Naive thymus-derived CD8-positive, alpha-beta T cell (primary cell): ENCODE measurements at regions of chr5 and their contacts with region 1.

Region 1: DNA sequence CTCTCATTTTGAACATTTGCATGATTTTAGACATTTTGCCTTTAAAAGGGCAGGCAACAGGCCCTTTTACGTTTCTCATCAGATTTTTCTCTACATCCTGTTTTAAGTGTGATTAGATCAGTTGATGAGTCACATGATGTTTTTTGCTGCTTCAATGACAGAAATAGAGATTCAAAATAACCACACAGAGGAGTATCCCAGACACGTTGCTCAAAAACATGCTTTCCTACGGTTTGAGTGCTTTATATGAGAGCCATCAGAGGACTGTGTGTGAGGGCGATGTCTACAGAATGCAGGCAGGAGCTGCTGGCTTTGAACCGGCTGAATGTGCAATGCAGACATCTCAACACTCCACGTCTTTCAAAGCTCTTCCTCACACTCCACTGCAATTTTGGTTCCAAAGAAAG is 42.1 kb downstream of the OTULIN start:
- DNase-seq: peak in 9 of 10 donors; percentile 29 to 84 (median 60)
- ATAC-seq: peak; percentile 95 to 96
- H3K4me3 Mint-ChIP-seq: peak overlapping the region; percentile 67 to 89 (median 84)
- H3K27ac Mint-ChIP-seq: peak overlapping the region; percentile 95 to 100 (median 100)
- H3K4me1 Mint-ChIP-seq: peaks cover 43 to 84% (median 78%) of the 10 kb centered on the region in 4 donors
- H3K27me3 Mint-ChIP-seq: no peaks in the 10 kb centered on the region

Region 2: DNA sequence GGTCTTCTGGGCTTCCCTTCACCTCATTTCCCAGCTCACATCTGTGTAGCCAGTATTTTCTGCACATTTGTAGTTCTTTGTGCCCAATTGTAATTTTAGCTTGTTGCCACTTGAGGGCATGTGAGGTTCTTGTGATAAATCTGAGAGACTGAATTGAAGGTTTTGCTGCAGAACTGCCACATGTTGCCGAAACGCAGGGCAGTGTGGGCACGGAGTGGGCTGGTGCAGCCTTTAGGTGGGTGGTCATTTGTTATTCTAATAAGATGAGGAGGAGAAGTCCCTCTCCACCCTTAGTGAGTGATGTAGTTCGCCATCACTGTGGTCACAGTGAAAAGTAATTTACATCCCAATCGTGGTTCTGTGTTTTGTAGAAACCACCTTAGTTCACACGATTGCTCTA is 20.9 kb before region 1 on chr5:
- POLR2A ChIA-PET with region 1: interaction called, 15 read pairs
- DNase-seq: peak in 8 of 10 donors; percentile 14 to 70 (median 50)
- ATAC-seq: peak; percentile 82 to 88
- H3K4me3 Mint-ChIP-seq: peak overlapping the region; percentile 28 to 80 (median 70)
- H3K27ac Mint-ChIP-seq: peak overlapping the region in 9 of 10 donors; percentile 40 to 90 (median 75)
- H3K4me1 Mint-ChIP-seq: peaks cover 7 to 12% (median 9%) of the 10 kb centered on the region in 4 donors
- H3K27me3 Mint-ChIP-seq: no peaks in the 10 kb centered on the region

Region 3: DNA sequence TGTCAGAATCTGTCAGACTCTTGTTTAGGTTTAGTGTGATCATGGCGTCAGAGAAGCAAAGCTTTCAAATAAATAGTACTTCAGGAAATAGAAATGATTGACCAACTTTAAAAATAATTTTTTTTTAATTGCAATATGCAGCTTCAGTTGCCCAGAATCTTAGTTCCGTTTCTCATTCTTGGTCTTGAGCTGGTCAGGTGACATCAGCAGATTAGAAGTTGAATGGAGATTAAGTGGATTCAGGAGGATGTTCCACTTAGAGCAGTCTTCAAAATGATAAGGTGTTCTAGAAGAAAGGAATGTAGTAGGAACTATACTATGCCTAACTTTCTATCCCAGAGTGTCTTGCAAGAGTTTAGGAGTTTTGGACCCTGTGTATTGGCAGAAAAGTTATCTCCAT is 11.5 kb before region 1 on chr5:
- POLR2A ChIA-PET with region 1: interaction called, 15 read pairs
- DNase-seq: no peak
- ATAC-seq: no peak
- H3K4me3 Mint-ChIP-seq: no peak overlapping the region
- H3K27ac Mint-ChIP-seq: no peak overlapping the region
- H3K4me1 Mint-ChIP-seq: peaks cover 13 to 23% (median 17%) of the 10 kb centered on the region in 4 donors
- H3K27me3 Mint-ChIP-seq: no peaks in the 10 kb centered on the region

Region 4: GRCh38 chr5:14727428-14727865 is 20.8 kb after region 1 on chr5:
- POLR2A ChIA-PET with region 1: interaction called, 13 read pairs
- DNase-seq: peak; percentile 38 to 81 (median 72)
- ATAC-seq: peak; percentile 55 to 83
- H3K4me3 Mint-ChIP-seq: no peak overlapping the region
- H3K27ac Mint-ChIP-seq: peak overlapping the region in 6 of 10 donors; percentile 1 to 61 (median 42)
- H3K4me1 Mint-ChIP-seq: peaks cover 0 to 15% (median 10%) of the 10 kb centered on the region in 4 donors
- H3K27me3 Mint-ChIP-seq: no peaks in the 10 kb centered on the region

Region 5: GRCh38 chr5:14834584-14835550 is 128.2 kb after region 1 on chr5:
- POLR2A ChIA-PET with region 1: no interaction called
- DNase-seq: no peak
- ATAC-seq: no peak
- H3K4me3 Mint-ChIP-seq: no peak overlapping the region
- H3K27ac Mint-ChIP-seq: peak overlapping the region in 2 of 10 donors; percentile 22 to 25
- H3K4me1 Mint-ChIP-seq: peaks cover 14 to 43% (median 39%) of the 10 kb centered on the region in 4 donors
- H3K27me3 Mint-ChIP-seq: no peaks in the 10 kb centered on the region

Region 6: DNA sequence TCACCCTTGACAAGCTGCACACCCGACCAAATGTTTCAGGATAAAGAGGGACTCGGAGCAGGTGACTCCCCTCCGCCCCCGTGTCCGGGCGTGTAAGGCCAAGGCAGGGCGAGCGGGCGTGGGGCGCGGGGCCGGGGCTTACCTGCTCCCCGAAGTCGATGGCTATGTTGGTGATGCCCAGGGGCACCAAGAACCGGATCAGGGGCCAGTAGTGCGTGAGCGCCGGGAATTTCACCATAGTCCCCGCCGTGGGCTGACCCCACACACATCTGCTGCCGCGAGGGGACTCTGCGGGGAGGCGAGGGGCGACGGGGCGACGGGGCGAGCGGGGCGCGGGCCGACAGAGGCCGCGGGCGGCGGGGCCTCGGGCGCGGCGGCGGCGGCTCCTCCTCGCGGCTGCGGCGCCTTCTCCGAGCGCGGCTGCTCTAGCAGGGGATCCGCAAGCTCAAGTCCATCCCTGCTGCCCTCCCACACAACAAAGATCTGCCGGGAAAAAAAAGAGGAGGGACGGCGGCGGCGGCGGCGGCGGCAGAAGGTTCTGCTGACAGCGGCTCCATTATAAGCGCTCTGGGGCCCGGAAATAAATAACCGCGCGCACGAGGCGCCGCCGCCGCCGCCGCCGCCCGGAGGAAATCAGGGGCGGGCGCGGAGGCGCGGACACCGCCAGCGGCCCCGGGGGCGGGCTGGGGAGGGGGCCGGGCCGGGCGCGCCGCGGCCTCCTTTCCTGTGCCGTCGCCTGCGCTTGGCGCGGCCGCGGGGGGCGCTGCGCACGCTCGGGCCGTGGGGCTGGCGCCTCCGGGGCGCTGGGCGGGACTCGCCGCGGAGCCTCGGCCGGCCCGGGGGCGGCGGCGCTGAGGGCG is 164.8 kb after region 1 on chr5 and contains the start of gene ANKH:
- POLR2A ChIA-PET with region 1: interaction called, 34 read pairs
- DNase-seq: peak; percentile 73 to 85 (median 82)
- ATAC-seq: peak; percentile 83 to 88
- H3K4me3 Mint-ChIP-seq: peak within 1 kb of the TSS; percentile 85 to 100 (median 98)
- H3K27ac Mint-ChIP-seq: peak within 1 kb of the TSS; percentile 89 to 98 (median 97)
- H3K4me1 Mint-ChIP-seq: peaks cover 25 to 45% (median 36%) of the 10 kb centered on the region in 4 donors
- H3K27me3 Mint-ChIP-seq: no peaks in the 10 kb centered on the region
- polyA plus RNA-seq, gene ANKH: 29.1 to 41.3 (median 40.4) TPM